Activated B cell treated with CpG ODN at 0.5 μM for 24 hours (primary cell): ENCODE measurements at regions of chr1 and their contacts with region 1.

Region 1: GRCh38 chr1:42759114-42759513 is 7.7 kb downstream of the P3H1 start:
- DNase-seq: no peak
- ATAC-seq: no peak
- H3K4me3 Mint-ChIP-seq: no peak overlapping the region
- H3K27ac Mint-ChIP-seq: peak overlapping the region; percentile 68
- H3K4me1 Mint-ChIP-seq: peaks cover 19% of the 10 kb centered on the region
- H3K27me3 Mint-ChIP-seq: no peaks in the 10 kb centered on the region
- CTCF ChIP-seq: no peak

Region 2: DNA sequence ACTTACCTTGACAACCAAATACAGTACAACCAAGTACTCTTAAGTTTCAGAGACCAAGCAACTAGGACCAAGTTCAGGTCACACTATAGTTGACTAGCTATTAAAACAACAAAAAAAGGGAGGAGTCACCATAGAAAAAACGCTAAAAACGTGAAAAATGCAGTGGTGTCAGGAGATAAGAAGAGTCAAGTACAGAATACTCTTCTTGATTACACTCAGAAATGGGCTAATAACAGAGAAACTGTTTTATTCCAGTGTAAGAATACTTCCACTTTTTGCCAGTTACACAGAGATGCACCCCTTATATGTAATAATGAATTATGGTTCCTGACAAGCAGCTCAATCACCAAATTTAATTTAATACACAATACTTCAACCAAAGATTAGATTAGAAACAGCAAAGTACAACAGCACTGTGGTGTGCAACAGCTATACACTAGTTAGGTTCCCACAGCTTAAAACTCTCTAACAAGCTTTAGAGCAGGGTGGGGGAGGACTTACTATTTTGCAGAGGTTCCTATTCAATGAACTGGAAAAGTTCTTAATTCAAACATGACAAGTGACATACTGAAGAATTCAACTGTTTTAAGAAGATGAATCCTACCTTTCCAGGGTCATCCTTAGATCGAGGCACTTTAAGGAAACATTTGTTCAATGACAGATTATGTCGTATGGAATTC is 494.5 kb before region 1 on chr1:
- CTCF ChIA-PET with region 1: no interaction called
- POLR2A ChIA-PET with region 1: interaction called, 11 read pairs
- intact Hi-C with region 1: no loop called
- DNase-seq: no peak
- ATAC-seq: no peak
- H3K4me3 Mint-ChIP-seq: no peak overlapping the region
- H3K27ac Mint-ChIP-seq: no peak overlapping the region
- H3K4me1 Mint-ChIP-seq: peaks cover 59% of the 10 kb centered on the region
- H3K27me3 Mint-ChIP-seq: no peaks in the 10 kb centered on the region
- CTCF ChIP-seq: no peak